H1 (cell line): ENCODE measurements at regions of chr10 and their contacts with region 1.

Region 1: GRCh38 chr10:88932539-88933256 is 19.9 kb downstream of the ACTA2 start:
- DNase-seq: peak in 1 of 2 experiments; percentile 52
- H3K4me3 ChIP-seq: no peak overlapping the region
- H3K27ac ChIP-seq: no peak overlapping the region
- H3K4me1 ChIP-seq: peaks cover 0 to 8% (median 3%) of the 10 kb centered on the region in 4 experiments; a peak in 3 of 7 replicates
- H3K27me3 ChIP-seq: no peaks in the 10 kb centered on the region
- CTCF ChIP-seq: peak in 2 of 3 experiments; percentile 90 to 92; a peak in 3 of 4 replicates
- EP300 ChIP-seq: peak in 1 of 2 experiments; percentile 28; a peak in 1 of 3 replicates
- POLR2A ChIP-seq: no peak
- RAD21 ChIP-seq: peak; percentile 86 to 90

Region 2: GRCh38 chr10:88657901-88658300 is 274.8 kb before region 1 on chr10:
- CTCF ChIA-PET with region 1: no interaction called
- POLR2A ChIA-PET with region 1: no interaction called
- DNase-seq: no peak
- H3K4me3 ChIP-seq: no peak overlapping the region
- H3K27ac ChIP-seq: no peak overlapping the region
- H3K4me1 ChIP-seq: no peaks in the 10 kb centered on the region
- H3K27me3 ChIP-seq: no peaks in the 10 kb centered on the region
- CTCF ChIP-seq: no peak
- EP300 ChIP-seq: no peak
- POLR2A ChIP-seq: no peak
- RAD21 ChIP-seq: no peak

Region 3: DNA sequence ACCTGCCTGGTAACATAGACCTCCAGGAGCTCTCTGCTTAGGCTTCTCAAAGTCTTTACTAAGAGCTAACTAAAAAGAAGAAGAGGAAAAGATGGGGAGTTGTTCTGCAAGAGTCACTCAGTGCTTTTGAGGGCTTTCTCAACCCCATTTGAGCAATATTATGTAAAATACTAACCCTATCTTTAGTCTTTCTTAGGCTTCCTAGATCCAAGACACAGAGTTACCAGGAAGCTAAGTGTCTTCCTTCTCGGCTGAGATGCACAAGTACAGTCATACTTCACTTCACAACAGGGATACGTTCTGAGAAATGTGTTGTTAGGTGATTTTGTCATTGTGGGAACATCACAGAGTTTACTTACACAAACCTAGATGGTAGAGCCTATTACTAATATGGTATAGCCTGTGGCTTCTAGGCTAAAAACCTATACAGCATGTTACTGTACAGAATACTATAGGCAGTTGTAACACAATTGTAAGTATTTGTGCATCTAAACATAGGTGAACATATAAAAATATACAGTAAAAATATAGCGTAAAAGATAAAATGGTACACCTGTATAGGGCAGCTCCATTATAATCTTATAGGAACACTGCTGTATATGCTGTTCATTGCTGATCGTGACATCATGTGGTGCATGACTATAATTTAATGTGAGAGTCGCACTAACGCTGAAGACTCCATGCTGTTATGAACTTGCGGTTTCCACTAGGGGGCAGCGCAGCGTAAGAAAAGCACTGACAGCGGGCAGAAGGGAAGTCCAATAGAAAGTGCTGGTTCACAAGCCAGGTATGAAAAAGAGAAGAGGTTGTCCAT is 97.4 kb before region 1 on chr10:
- CTCF ChIA-PET with region 1: interaction called, 279 read pairs
- POLR2A ChIA-PET with region 1: no interaction called
- DNase-seq: peak in 1 of 2 experiments; percentile 80
- H3K4me3 ChIP-seq: no peak overlapping the region
- H3K27ac ChIP-seq: no peak overlapping the region
- H3K4me1 ChIP-seq: no peaks in the 10 kb centered on the region
- H3K27me3 ChIP-seq: no peaks in the 10 kb centered on the region
- CTCF ChIP-seq: peak; percentile 69 to 95 (median 87)
- EP300 ChIP-seq: no peak
- POLR2A ChIP-seq: no peak
- RAD21 ChIP-seq: peak; percentile 97 to 98

Region 4: GRCh38 chr10:88880282-88881076 is 52.2 kb before region 1 on chr10:
- CTCF ChIA-PET with region 1: interaction called, 11 read pairs
- POLR2A ChIA-PET with region 1: interaction called, 5 read pairs
- DNase-seq: peak; percentile 49 to 82
- H3K4me3 ChIP-seq: peak overlapping the region; percentile 70 to 81 (median 77)
- H3K27ac ChIP-seq: peak overlapping the region; percentile 69
- H3K4me1 ChIP-seq: peaks cover 0 to 6% (median 2%) of the 10 kb centered on the region in 4 experiments; a peak in 3 of 7 replicates
- H3K27me3 ChIP-seq: peaks cover 0 to 3% (median 1%) of the 10 kb centered on the region in 4 experiments; a peak in 1 of 7 replicates
- CTCF ChIP-seq: peak in 1 of 3 experiments; percentile 8; a peak in 1 of 4 replicates
- EP300 ChIP-seq: no peak
- POLR2A ChIP-seq: peak in 1 of 2 experiments; percentile 75; a peak in 2 of 3 replicates
- RAD21 ChIP-seq: no peak

Region 5: DNA sequence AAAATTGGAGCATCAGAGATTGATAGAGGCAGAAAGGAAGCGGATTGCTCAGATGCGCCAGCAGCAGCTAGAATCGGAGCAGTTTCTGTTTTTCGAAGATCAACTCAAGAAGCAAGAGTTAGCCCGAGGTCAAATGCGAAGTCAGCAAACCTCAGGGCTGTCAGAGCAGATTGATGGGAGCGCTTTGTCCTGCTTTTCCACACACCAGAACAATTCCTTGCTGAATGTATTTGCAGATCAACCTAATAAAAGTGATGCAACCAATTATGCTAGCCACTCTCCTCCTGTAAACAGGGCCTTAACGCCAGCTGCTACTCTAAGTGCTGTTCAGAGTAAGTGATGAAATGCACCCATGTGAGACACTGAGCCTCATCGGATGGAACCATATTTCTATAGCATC is 19.6 kb before region 1 on chr10:
- CTCF ChIA-PET with region 1: interaction called, 10 read pairs
- POLR2A ChIA-PET with region 1: no interaction called
- DNase-seq: no peak
- H3K4me3 ChIP-seq: no peak overlapping the region
- H3K27ac ChIP-seq: no peak overlapping the region
- H3K4me1 ChIP-seq: no peaks in the 10 kb centered on the region
- H3K27me3 ChIP-seq: no peaks in the 10 kb centered on the region
- CTCF ChIP-seq: no peak
- EP300 ChIP-seq: no peak
- POLR2A ChIP-seq: no peak
- RAD21 ChIP-seq: no peak

Region 6: DNA sequence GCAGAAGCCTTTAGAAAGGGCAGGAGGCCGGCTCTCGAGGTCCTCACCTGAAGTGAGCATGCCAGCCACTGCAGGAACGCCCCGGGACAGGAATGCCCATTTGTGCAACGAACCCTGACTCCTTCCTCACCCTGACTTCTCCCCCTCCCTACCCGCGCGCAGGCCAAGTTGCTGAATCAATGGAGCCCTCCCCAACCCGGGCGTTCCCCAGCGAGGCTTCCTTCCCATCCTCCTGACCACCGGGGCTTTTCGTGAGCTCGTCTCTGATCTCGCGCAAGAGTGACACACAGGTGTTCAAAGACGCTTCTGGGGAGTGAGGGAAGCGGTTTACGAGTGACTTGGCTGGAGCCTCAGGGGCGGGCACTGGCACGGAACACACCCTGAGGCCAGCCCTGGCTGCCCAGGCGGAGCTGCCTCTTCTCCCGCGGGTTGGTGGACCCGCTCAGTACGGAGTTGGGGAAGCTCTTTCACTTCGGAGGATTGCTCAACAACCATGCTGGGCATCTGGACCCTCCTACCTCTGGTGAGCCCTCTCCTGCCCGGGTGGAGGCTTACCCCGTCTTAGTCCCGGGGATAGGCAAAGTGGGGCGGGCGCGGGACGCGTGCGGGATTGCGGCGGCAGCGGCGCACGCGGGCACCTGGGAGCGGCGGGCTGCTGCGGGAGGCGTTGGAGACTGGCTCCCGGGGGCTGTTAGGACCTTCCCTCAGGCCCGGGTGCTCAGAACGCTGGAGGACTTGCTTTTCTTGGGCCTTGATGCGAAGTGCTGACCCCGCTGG is 57.9 kb after region 1 on chr10 and contains the start of gene FAS:
- CTCF ChIA-PET with region 1: interaction called, 103 read pairs
- POLR2A ChIA-PET with region 1: no interaction called
- DNase-seq: peak in 1 of 2 experiments; percentile 74
- H3K4me3 ChIP-seq: peak within 1 kb of the TSS; percentile 68 to 88 (median 87)
- H3K27ac ChIP-seq: peak within 1 kb of the TSS; percentile 30; the same call in 1 of the 2 replicates
- H3K4me1 ChIP-seq: peaks cover 0 to 9% (median 1%) of the 10 kb centered on the region in 4 experiments; a peak in 3 of 7 replicates
- H3K27me3 ChIP-seq: peaks cover 0 to 13% (median 7%) of the 10 kb centered on the region in 4 experiments; a peak in 6 of 7 replicates
- CTCF ChIP-seq: no peak
- EP300 ChIP-seq: no peak
- POLR2A ChIP-seq: 0 out of 3 replicates have a peak, but pooled peaks of 1 of the 2 experiments have one; percentile 39
- RAD21 ChIP-seq: no peak
- total RNA-seq, gene FAS: 4.0 and 5.4 TPM in 2 replicates

Region 7: GRCh38 chr10:89207181-89207800 is 274.6 kb after region 1 on chr10 and contains the start of gene CH25H:
- CTCF ChIA-PET with region 1: interaction called, 19 read pairs
- POLR2A ChIA-PET with region 1: interaction called, 3 read pairs
- DNase-seq: no peak
- H3K4me3 ChIP-seq: peak within 1 kb of the TSS; percentile 47 to 65 (median 52)
- H3K27ac ChIP-seq: no peak within 1 kb of the TSS
- H3K4me1 ChIP-seq: peaks cover 0 to 16% (median 9%) of the 10 kb centered on the region in 4 experiments; a peak in 6 of 7 replicates
- H3K27me3 ChIP-seq: peaks cover 9 to 46% (median 37%) of the 10 kb centered on the region in 4 experiments
- CTCF ChIP-seq: no peak
- EP300 ChIP-seq: no peak
- POLR2A ChIP-seq: no peak
- RAD21 ChIP-seq: no peak
- total RNA-seq, gene CH25H: 0.56 TPM in 1 of 2 replicates, not detected in the other